Posterior vena cava (tissue), 2 donors: ENCODE measurements at regions of chr1 and their contacts with region 1.

Region 1: DNA sequence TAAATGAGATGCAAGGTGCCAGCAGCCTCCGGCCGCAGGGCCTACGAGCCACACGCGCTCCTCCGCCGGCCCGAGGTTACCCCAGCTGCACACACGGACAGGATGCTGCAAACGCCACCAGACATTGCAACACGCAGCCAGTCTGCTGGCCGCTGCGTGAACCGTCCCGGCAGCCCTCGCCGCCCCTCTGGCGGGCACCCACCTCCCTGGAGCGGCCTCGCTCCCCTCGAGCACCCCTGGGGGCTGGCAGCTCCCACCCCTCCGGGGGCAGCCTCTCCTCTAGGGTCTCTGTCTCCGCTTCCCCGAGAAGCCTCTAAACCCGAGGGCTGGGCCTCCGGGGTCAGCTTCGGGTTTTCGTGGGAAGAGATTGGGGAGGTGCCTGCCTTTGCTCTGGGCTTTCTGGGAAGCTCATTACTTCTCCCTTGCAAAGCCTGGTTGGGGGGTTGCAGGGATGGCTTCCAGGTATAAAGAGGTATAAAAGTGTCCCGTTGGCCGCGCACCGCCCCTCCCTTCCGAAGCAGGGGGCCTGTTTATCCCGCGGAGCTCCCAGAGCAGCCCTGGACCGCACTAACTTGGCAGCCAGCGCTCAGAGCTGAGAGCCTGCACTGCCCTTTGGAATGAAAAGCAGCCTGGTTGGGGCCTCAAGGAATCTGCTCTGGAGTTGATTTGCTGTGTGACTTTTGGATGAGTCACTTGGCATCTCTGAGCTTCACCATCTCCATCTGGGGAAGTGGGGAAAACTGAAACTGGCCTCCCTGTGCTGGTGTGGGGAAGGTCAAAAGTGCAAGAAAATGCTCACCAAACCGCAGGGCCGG is 21.8 kb downstream of the DHRS3 start:
- DNase-seq: peak; percentile 93

Region 2: DNA sequence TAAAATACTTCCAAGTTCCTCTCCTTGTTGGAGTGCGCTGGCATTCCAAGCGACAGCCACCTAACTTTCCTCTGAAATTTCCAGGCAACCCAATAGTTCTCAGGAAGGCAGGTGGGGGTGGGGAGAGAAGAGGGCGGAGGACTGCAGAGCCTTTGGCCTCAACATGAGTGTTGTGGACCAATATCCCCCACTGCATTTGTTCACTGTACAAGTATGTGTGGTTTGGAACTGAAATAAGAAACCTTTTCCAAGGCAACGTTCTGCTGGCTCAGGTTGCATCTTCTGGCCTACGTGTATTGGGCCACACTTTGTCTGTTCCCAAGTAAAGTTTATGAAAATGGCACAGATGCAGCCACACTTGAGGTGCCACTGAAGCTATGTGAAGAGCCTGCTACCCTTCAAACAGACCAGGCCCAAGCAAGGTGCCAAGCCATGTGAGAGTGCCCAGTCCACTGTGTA is 131.6 kb before region 1 on chr1:
- intact Hi-C with region 1: no loop called
- DNase-seq: no peak

Region 3: DNA sequence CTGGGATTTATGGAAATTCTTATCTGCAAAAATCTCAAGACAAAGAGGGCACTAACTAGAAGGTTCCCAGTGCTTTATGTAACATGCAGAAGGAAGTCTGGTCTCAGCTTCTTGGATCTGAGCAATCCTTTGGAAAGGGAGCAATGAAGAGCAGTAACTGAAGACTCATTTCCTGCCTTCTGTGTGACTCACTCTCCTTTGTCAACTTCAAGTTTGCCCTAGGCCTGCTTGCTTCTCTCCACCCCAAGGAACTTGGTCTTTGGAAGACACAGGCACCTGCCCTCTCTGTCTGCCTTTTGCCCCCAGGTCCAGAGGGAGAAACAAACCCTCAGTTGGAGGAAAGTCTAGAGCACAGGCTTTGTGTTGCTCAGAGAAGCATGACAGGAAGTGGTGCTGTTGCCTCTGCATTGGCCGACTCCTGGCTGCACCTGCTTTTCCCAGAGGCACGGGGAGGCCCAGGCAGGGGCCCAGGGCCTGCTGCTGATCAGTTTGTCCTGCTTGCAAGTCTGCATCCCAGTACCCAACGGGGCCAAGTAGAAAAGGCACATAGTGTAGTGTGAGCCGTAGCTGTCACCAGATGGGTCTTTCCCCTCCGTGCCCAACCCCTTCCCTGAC is 115.4 kb before region 1 on chr1:
- intact Hi-C with region 1: loop called in 1 of 2 experiments (anchors 10 kb)
- DNase-seq: no peak

Region 4: GRCh38 chr1:12549460-12550349 is 46.5 kb before region 1 on chr1:
- intact Hi-C with region 1: loop called (anchors 5 kb)
- DNase-seq: peak; percentile 95

Region 5: DNA sequence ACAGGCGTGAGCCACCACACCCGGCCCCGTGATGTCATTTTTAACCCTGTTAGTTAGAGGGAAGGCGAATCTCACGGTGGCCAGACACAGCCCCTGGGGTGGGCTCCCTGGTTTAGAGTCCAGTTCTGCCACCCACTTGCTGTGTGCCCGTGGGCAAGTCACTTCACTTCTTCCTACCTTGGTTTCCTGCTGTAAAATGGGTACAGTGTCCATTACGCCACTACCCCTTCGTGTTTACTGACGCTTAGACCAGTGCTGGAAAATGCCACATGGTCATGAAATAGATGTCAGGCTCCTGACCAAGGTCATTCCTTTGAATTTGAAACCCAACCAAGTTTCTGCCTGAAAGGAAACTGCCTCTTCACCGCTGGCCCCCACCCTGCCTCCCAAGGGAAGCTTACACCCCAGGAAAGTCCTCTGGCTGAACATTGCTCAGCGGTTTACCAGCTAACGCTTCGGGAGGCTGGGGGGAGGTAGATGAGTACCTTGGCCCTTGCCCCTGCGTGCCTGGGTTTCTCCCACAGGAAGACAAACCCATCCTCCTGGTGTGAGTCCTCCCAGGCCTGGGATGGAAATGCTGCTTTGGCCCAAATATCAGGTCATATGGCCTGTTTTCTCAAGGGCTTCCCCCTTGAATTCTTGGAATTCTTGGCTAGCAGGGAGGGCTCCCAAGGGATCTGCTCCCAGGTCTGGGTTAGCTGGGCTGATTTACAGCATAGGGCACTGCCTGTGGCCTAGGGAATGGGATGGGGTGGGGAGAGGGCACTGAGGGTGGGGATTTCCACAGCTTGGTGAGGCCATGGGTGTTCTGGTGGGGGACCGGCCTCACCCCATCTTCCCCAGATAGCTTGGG is 40.1 kb after region 1 on chr1:
- intact Hi-C with region 1: no loop called
- DNase-seq: no peak